Activated CD4-positive, alpha-beta T cell treated with anti-CD3 and anti-CD28 coated beads for 36 hours (primary cell): ENCODE measurements at regions of chr2 and their contacts with region 1.

Region 1: DNA sequence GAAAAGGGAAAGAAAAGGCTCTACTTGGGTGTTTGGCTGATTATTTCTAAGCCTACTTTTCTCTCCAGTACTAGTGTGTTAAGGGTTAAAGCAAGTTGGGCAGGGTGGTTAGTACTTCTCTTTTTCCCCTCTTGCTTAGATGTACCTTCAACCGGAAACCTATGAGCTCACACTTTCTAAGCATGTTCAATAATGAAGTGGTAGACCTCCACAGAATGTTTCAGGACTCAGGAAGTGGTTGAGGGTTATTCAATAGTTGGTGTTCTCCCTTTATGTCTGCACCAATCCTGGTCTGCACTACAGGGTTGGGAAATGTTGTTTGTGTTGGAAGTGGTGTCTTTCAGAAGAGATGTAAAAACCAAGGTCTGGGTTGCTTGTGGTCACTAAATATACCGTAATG is 137.1 kb downstream of the ZEB2 start:
- DNase-seq: no peak
- ATAC-seq: peak; percentile 93
- H3K4me3 Mint-ChIP-seq: no peak overlapping the region
- H3K27ac Mint-ChIP-seq: no peak overlapping the region
- H3K4me1 Mint-ChIP-seq: peaks cover 34% of the 10 kb centered on the region
- H3K27me3 Mint-ChIP-seq: peaks cover 7% of the 10 kb centered on the region

Region 2: GRCh38 chr2:144332356-144333142 is 50.3 kb before region 1 on chr2:
- CTCF ChIA-PET with region 1: no interaction called
- POLR2A ChIA-PET with region 1: no interaction called
- intact Hi-C with region 1: loop called in 1 of 2 experiments (anchors 2 kb)
- DNase-seq: peak; percentile 94
- ATAC-seq: peak; percentile 88
- H3K4me3 Mint-ChIP-seq: peak overlapping the region; percentile 93
- H3K27ac Mint-ChIP-seq: peak overlapping the region; percentile 88
- H3K4me1 Mint-ChIP-seq: peaks cover 32% of the 10 kb centered on the region
- H3K27me3 Mint-ChIP-seq: peaks cover 2% of the 10 kb centered on the region

Region 3: DNA sequence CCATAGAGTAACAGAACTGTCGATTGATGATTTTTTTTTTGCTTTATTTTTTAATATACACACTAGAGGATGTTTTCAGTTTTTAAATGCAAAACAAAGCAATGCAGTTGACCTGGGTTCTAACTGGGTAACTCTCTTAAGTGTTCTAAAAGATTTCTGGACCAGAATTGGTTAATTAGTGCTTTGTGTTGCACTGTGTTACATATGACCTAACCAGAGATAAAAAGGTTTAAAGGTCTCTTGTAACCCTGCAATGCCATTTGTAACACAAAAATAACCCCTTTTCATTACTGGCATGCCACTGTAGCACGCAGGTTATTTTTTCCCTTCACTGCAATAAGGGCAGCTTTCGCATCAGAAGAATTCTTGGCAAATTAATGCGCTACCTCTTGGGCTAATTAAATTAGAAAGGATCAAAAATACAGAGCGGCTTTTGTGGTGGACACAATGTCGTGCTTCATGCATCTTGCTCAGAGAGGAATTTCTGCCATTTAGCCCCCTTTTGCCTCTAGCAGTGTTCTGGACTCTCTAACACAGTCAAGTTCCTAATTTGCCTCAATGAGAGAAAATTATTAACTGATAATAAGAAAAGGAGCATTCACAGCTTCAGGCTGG is 387.9 kb after region 1 on chr2:
- CTCF ChIA-PET with region 1: no interaction called
- POLR2A ChIA-PET with region 1: no interaction called
- intact Hi-C with region 1: no loop called
- DNase-seq: no peak
- ATAC-seq: no peak
- H3K4me3 Mint-ChIP-seq: no peak overlapping the region
- H3K27ac Mint-ChIP-seq: no peak overlapping the region
- H3K4me1 Mint-ChIP-seq: no peaks in the 10 kb centered on the region
- H3K27me3 Mint-ChIP-seq: peaks cover 7% of the 10 kb centered on the region

Region 4: GRCh38 chr2:145287736-145288135 is 904.9 kb after region 1 on chr2:
- CTCF ChIA-PET with region 1: no interaction called
- POLR2A ChIA-PET with region 1: no interaction called
- intact Hi-C with region 1: no loop called
- DNase-seq: no peak
- ATAC-seq: no peak
- H3K4me3 Mint-ChIP-seq: no peak overlapping the region
- H3K27ac Mint-ChIP-seq: no peak overlapping the region
- H3K4me1 Mint-ChIP-seq: no peaks in the 10 kb centered on the region
- H3K27me3 Mint-ChIP-seq: peaks cover 3% of the 10 kb centered on the region